ENCODE measurements at regions of chr1 and their contacts with region 1.

Region 1: GRCh38 chr1:231357831-231358354 is 19.8 kb downstream of the SPRTN start:
- DNase-seq: no peak

Region 2: GRCh38 chr1:231334079-231334666 is 23.7 kb before region 1 on chr1:
- intact Hi-C with region 1: no loop called
- DNase-seq: no peak

Region 3: GRCh38 chr1:231528172-231529029 is 170.5 kb after region 1 on chr1 and contains the start of gene TSNAX:
- intact Hi-C with region 1: loop called (anchors 5 kb)
- DNase-seq: peak; percentile 94
- total RNA-seq, gene TSNAX: 35.3 TPM

Region 4: DNA sequence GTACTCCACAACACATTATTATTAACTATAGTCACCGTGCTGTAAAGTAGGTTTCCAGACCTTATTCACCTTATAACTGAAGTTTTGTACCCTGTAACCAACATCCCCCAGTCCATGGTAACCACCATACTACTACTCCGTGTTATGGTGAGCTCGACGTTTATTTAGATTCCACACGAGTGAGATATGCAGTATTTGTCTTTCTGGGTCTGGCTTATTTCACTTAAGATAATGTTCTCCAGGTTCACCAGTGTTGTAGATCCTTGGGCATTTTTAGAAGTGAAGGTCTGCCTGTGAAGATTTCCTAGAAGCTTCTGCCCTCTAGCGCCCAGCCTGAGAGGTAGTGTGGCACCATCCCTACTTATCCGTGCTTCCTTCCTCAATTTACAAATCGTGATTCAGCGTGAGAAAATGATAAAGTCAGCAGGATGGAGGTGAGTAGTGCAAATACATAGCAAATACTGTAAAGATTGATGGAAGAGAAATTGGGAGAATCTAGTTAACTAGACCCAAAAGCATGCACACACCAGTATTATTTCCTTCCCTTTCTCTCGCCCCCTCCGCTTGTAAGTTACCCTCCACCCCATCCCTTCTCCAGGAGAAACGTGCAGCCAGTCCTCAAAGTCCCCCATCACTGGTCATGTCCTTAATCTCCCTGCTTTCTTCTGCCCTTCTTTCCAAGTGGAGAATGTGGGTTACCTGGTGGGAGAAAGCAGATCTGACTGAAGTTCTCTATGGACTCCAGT is 232.7 kb after region 1 on chr1:
- intact Hi-C with region 1: loop called (anchors 2 kb)
- DNase-seq: no peak

Measured in cardiac septum (tissue), 1 donor.